BJ (cell line): ENCODE measurements at regions of chr6 and their contacts with region 1.

Region 1: GRCh38 chr6:53375847-53376246 is 27.1 kb upstream of the ELOVL5 start:
- DNase-seq: no peak
- H3K4me3 ChIP-seq: no peak overlapping the region
- H3K27me3 ChIP-seq: no peaks in the 10 kb centered on the region
- CTCF ChIP-seq: no peak

Region 2: DNA sequence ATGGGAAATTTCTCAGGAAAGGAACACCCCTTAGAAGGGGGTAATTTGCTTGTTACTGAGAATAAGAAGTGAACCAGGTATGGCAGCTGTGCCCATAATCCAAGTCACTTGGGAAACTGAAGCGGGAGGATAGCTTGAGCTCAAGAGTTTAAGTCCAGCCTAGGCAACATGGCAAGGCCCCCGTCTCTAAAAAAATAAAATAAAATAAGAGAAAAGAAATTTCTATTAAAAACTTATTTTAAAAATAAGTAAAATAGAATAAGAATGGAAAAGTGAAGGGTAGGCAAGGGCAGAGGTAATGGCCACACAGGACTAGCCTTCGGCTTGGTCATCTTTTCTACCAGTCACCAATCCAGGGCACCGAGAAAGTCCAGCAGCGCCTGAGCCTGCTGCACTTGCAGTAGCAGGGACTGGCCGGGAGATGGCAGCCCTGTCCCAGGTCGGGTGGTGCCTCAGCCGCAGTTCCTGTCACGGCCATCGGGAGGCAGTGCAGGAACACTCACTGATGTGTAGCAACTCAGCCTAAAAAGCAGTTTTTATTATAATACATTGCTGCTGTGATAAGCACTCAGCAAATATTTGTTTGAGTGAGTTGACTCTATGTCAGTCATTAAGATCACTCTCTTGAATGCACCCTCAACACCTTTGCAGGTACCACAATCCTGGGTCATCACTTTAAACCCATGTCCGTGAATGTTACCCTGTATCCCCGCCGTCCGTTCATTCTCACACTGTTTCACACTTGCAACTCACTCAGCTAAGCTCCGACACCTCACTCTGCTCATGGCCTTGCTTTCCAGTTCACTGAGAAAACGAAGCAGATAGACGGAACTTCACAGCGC is 204.0 kb before region 1 on chr6:
- CTCF ChIA-PET with region 1: no interaction called
- POLR2A ChIA-PET with region 1: no interaction called
- DNase-seq: no peak
- H3K4me3 ChIP-seq: no peak overlapping the region
- H3K27me3 ChIP-seq: no peaks in the 10 kb centered on the region
- CTCF ChIP-seq: peak; percentile 100

Region 3: DNA sequence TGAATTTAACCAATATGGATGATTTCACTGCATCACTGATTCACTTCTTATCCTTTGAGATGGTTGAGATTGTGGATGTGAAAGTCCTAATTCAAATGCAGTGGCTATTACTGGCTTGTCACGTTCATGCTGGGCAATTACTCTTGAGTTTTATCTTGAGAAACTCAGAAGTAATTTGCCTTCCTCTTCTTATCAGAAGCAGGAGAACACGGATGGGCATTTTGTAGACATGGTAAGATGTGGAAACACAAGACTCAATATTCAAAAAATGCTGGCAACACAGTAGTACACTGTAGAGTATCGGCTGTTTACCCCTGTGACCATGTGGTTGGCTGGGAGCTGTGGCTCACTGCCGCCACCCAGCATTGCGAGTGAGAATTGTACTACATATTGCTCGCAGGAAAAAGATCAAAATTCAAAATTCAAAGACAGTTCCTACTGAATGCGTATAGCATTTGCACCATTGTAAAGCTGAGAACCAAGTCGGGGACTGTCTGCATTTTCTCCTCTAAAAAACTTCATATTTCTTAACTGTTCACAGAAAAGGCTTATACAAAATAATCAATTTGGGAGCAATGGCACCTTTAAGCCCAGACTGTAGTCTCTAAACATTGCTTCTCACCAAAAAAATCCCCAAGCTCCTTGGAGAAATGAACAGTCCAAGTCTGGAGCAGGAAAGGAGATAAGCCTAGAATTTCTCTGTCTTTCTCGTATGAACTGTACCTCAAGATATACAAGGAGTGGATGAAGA is 34.8 kb after region 1 on chr6:
- CTCF ChIA-PET with region 1: no interaction called
- POLR2A ChIA-PET with region 1: no interaction called
- DNase-seq: no peak
- H3K4me3 ChIP-seq: no peak overlapping the region
- H3K27me3 ChIP-seq: peaks cover 3% of the 10 kb centered on the region
- CTCF ChIP-seq: peak; percentile 60

Region 4: DNA sequence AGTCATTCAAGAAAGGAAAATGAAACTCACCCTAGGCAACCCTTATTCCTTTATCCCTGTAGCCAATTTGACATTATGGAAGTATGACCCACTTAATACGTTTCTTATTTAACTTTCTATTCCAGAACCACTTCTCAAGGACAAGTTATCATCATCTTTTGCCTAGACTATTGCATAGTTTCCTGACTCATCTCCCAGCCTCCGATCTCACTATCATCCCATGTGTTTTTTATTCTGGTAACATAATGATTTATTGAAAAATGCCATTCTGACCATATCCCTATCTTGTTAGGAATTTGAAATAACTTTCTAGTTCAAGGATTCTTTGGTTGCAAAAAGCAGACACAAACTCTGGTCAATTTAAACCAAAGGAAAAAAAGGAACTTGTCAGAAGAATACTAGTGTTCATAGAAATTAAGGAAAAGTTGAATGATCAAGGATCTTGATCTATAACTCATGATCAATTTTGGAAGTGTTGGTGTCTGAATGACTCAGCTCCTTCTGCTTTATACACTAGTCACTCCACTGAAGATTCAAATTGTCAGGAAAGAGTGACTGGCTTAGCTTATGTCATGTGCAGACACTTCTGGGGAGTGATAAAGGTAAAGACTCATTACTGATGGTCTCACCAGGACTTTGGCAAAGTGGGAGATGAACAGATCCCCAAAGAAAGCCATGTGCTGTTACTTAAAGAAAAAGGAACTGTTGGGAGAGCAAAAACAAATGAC is 923.9 kb after region 1 on chr6:
- CTCF ChIA-PET with region 1: no interaction called
- POLR2A ChIA-PET with region 1: interaction called, 14 read pairs
- DNase-seq: peak; percentile 64
- H3K4me3 ChIP-seq: no peak overlapping the region
- H3K27me3 ChIP-seq: no peaks in the 10 kb centered on the region
- CTCF ChIP-seq: no peak